ENCODE measurements at regions of chr1 and their contacts with region 1.

Region 1: GRCh38 chr1:110963691-110964399 is at the start of gene LRIF1:
- DNase-seq: peak; percentile 97 to 100 (median 98)
- ATAC-seq: peak; percentile 97
- H3K4me3 ChIP-seq: peak within 1 kb of the TSS; percentile 76
- H3K27ac ChIP-seq: peak within 1 kb of the TSS; percentile 98
- H3K4me1 ChIP-seq: peaks cover 0 to 12% of the 10 kb centered on the region in 2 experiments; a peak in 2 of 5 replicates
- H3K27me3 ChIP-seq: no peaks in the 10 kb centered on the region
- CTCF ChIP-seq: peak; percentile 47 to 61 (median 57); a peak in 5 of 6 replicates
- EP300 ChIP-seq: peak; percentile 86
- POLR2A ChIP-seq: peak; percentile 99
- RAD21 ChIP-seq: peak in 1 of 2 experiments; percentile 7; a peak in 2 of 4 replicates
- polyA plus RNA-seq, gene LRIF1: 79.7 to 86.1 TPM

Region 2: DNA sequence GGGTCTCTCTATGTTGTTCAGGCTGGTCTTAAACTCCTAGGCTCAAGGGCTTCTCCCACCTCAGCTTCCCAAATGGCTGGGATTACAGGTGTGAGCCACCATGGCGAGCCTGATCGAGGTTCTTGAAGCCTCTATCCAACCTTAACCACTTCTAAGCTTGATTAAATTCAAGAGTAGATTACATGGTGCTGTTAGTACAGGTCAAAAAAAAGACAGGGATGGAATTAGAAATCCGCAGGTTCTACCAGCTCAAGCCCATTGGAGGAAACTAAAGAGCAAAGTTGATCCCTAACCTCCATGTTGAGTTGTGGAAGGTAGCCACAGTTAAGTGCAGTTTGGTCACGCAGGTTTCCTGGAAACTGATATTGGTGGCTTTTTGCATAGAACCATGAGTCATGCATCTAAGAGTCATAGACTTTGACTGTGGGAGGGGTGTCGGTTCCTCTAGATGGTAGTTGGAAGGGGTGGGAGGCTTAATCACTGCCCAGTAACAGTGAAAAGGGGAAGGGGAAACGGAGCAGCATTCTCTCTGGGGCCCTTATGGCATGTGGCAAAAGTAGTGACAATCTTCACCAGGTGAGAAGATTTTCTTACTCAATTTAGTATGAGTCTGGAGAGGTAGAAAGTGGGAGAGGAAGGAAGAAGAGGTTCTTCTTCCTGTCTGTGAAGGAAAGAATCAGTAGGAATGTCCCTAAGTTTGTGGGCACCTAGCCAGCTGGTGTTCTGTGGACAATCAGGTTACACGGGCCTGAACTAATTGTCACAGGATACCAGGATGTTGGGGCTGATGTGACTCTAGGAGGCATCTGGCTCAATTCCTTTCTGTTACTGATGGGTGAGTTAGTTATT is 83.9 kb before region 1 on chr1:
- CTCF ChIA-PET with region 1: no interaction called
- POLR2A ChIA-PET with region 1: interaction called, 6 read pairs
- in situ Hi-C with region 1: no loop called
- intact Hi-C with region 1: loop called (anchors 2 kb)
- DNase-seq: peak; percentile 58 to 95 (median 76)
- ATAC-seq: peak; percentile 87
- H3K4me3 ChIP-seq: peak overlapping the region; percentile 5; the same call in 1 of the 2 replicates
- H3K27ac ChIP-seq: peak overlapping the region; percentile 93
- H3K4me1 ChIP-seq: peaks cover 6 to 61% of the 10 kb centered on the region in 2 experiments; a peak in 4 of 5 replicates
- H3K27me3 ChIP-seq: no peaks in the 10 kb centered on the region
- CTCF ChIP-seq: no peak
- EP300 ChIP-seq: peak; percentile 91
- POLR2A ChIP-seq: peak; percentile 66
- RAD21 ChIP-seq: peak in 1 of 2 experiments; percentile 15; a peak in 1 of 4 replicates

Region 3: GRCh38 chr1:110890474-110891196 is 73.2 kb before region 1 on chr1:
- CTCF ChIA-PET with region 1: no interaction called
- POLR2A ChIA-PET with region 1: interaction called, 10 read pairs
- in situ Hi-C with region 1: no loop called
- intact Hi-C with region 1: no loop called
- DNase-seq: peak in 3 of 4 experiments; percentile 29 to 67 (median 58)
- ATAC-seq: peak; percentile 85
- H3K4me3 ChIP-seq: no peak overlapping the region
- H3K27ac ChIP-seq: peak overlapping the region; percentile 68
- H3K4me1 ChIP-seq: peaks cover 10 to 51% of the 10 kb centered on the region in 2 experiments; a peak in 4 of 5 replicates
- H3K27me3 ChIP-seq: no peaks in the 10 kb centered on the region
- CTCF ChIP-seq: no peak
- EP300 ChIP-seq: peak; percentile 70
- POLR2A ChIP-seq: no peak
- RAD21 ChIP-seq: no peak; a peak in 1 of 4 replicates

Region 4: GRCh38 chr1:110916669-110917306 is 47.1 kb before region 1 on chr1:
- CTCF ChIA-PET with region 1: no interaction called
- POLR2A ChIA-PET with region 1: interaction called, 3 read pairs
- in situ Hi-C with region 1: no loop called
- intact Hi-C with region 1: loop called (anchors 2 kb)
- DNase-seq: peak; percentile 72 to 94 (median 80)
- ATAC-seq: peak; percentile 96
- H3K4me3 ChIP-seq: 0 out of 2 replicates have a peak overlapping the region, but pooled peaks have one; percentile 2
- H3K27ac ChIP-seq: peak overlapping the region; percentile 88
- H3K4me1 ChIP-seq: peaks cover 5 to 23% of the 10 kb centered on the region in 2 experiments; a peak in 4 of 5 replicates
- H3K27me3 ChIP-seq: no peaks in the 10 kb centered on the region
- CTCF ChIP-seq: no peak
- EP300 ChIP-seq: peak; percentile 79
- POLR2A ChIP-seq: peak; percentile 50
- RAD21 ChIP-seq: peak in 1 of 2 experiments; percentile 15; a peak in 1 of 4 replicates

Region 5: DNA sequence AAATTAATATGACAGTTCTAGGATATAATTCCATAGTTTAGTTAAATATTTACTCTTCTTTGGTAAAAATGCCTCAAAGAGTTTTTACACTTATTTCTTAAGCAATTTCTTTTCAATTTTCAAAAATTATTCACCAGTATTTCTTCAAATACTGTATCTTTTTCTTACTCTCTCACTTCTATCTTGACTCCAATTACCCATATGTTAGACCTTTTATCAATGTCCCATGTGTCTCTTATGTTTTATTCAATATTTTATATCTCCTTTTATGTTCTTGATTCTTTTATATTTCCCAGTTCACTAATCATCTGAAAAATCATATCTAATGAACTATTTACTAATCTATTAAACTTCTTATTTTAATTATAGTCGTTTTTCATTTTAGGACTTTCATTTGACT is 11.4 kb after region 1 on chr1:
- CTCF ChIA-PET with region 1: no interaction called
- POLR2A ChIA-PET with region 1: interaction called, 15 read pairs
- in situ Hi-C with region 1: no loop called
- intact Hi-C with region 1: no loop called
- DNase-seq: no peak
- ATAC-seq: no peak
- H3K4me3 ChIP-seq: no peak overlapping the region
- H3K27ac ChIP-seq: no peak overlapping the region
- H3K4me1 ChIP-seq: no peaks in the 10 kb centered on the region
- H3K27me3 ChIP-seq: no peaks in the 10 kb centered on the region
- CTCF ChIP-seq: no peak
- EP300 ChIP-seq: no peak
- POLR2A ChIP-seq: no peak
- RAD21 ChIP-seq: no peak

Measured in K562 (cell line).